ENCODE measurements at regions of chr9 and their contacts with region 1.

Region 1: DNA sequence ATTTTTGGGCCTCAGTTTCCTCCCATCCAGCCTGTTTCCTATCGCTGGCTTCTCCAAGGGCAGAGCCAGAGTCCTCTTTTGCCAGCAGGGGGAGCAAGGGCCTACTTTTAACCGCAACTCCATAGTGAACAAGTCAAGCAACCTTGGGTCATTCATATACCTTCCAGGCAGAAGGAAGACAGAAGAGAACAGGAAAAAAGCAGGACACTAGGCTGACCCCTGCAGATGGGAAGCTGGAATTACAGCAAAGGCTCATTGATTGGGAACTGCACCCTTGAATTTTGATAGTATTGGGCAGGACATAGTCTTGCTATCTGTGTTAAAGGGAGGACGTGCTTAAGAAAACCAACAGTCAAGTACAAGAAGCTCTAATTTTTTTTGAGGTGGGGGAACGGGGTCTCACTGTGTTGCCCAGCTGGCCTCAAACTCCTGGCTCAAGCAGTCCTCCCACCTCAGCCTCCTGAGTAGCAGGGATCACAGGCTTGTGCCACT is 30.1 kb downstream of the QRFP start:
- DNase-seq: peak in 1 of 2 donors; percentile 70
- ATAC-seq: peak; percentile 42 to 69 (median 44)
- H3K4me3 ChIP-seq: no peak overlapping the region
- H3K4me3 Mint-ChIP-seq: no peak overlapping the region
- H3K27ac ChIP-seq: no peak overlapping the region
- H3K27ac Mint-ChIP-seq: peak overlapping the region in 1 of 2 donors; percentile 13
- H3K4me1 ChIP-seq: no peaks in the 10 kb centered on the region
- H3K4me1 Mint-ChIP-seq: peaks cover 7 to 15% of the 10 kb centered on the region in 2 donors
- H3K27me3 ChIP-seq: no peaks in the 10 kb centered on the region
- H3K27me3 Mint-ChIP-seq: no peaks in the 10 kb centered on the region
- CTCF ChIP-seq: peak; percentile 57

Region 2: DNA sequence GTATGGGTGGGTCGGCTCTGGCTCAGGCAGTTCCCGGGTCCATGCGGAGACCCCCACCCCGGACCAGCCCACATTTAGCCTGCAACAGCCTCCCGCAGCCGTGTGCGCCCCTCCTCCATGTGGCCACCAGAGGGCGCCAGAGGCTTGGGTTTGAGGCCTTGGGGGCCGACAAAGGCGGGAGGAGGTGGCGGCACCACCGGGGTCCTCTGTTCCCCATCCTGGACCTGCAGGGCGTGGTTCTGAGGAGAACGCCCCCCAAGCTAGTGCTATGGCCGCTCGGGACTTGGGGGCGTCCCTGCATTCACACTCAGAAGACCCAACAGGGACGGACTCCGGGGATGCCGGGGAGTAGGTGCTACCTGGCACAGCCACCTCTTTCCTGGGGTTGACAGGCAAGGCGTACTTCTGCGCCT is 405.3 kb before region 1 on chr9:
- intact Hi-C with region 1: loop called (anchors 10 kb)
- DNase-seq: peak; percentile 66 to 83
- ATAC-seq: peak; percentile 61 to 78 (median 62)
- H3K4me3 ChIP-seq: no peak overlapping the region
- H3K4me3 Mint-ChIP-seq: no peak overlapping the region
- H3K27ac ChIP-seq: no peak overlapping the region
- H3K27ac Mint-ChIP-seq: no peak overlapping the region
- H3K4me1 ChIP-seq: no peaks in the 10 kb centered on the region
- H3K4me1 Mint-ChIP-seq: no peaks in the 10 kb centered on the region
- H3K27me3 ChIP-seq: no peaks in the 10 kb centered on the region
- H3K27me3 Mint-ChIP-seq: peaks cover 8 to 10% of the 10 kb centered on the region in 2 donors
- CTCF ChIP-seq: peak; percentile 85

Region 3: GRCh38 chr9:130607640-130608420 is 258.7 kb before region 1 on chr9:
- intact Hi-C with region 1: no loop called
- DNase-seq: no peak
- ATAC-seq: no peak
- H3K4me3 ChIP-seq: no peak overlapping the region
- H3K4me3 Mint-ChIP-seq: no peak overlapping the region
- H3K27ac ChIP-seq: no peak overlapping the region
- H3K27ac Mint-ChIP-seq: no peak overlapping the region
- H3K4me1 ChIP-seq: no peaks in the 10 kb centered on the region
- H3K4me1 Mint-ChIP-seq: peaks cover 9 to 11% of the 10 kb centered on the region in 2 donors
- H3K27me3 ChIP-seq: no peaks in the 10 kb centered on the region
- H3K27me3 Mint-ChIP-seq: no peaks in the 10 kb centered on the region
- CTCF ChIP-seq: no peak

Region 4: GRCh38 chr9:130707225-130707976 is 159.1 kb before region 1 on chr9:
- intact Hi-C with region 1: loop called (anchors 1 kb)
- DNase-seq: peak; percentile 58 to 88
- ATAC-seq: peak; percentile 46 to 69 (median 46)
- H3K4me3 ChIP-seq: no peak overlapping the region
- H3K4me3 Mint-ChIP-seq: no peak overlapping the region
- H3K27ac ChIP-seq: no peak overlapping the region
- H3K27ac Mint-ChIP-seq: no peak overlapping the region
- H3K4me1 ChIP-seq: peaks cover 6% of the 10 kb centered on the region
- H3K4me1 Mint-ChIP-seq: peaks cover 7 to 8% of the 10 kb centered on the region in 2 donors
- H3K27me3 ChIP-seq: no peaks in the 10 kb centered on the region
- H3K27me3 Mint-ChIP-seq: no peaks in the 10 kb centered on the region
- CTCF ChIP-seq: peak; percentile 80

Region 5: GRCh38 chr9:130770679-130771442 is 95.7 kb before region 1 on chr9:
- intact Hi-C with region 1: loop called (anchors 1 kb)
- DNase-seq: peak in 1 of 2 donors; percentile 61
- ATAC-seq: peak; percentile 82 to 86 (median 85)
- H3K4me3 ChIP-seq: no peak overlapping the region
- H3K4me3 Mint-ChIP-seq: no peak overlapping the region
- H3K27ac ChIP-seq: no peak overlapping the region
- H3K27ac Mint-ChIP-seq: no peak overlapping the region
- H3K4me1 ChIP-seq: peaks cover 16% of the 10 kb centered on the region
- H3K4me1 Mint-ChIP-seq: peaks cover 30 to 37% of the 10 kb centered on the region in 2 donors
- H3K27me3 ChIP-seq: no peaks in the 10 kb centered on the region
- H3K27me3 Mint-ChIP-seq: no peaks in the 10 kb centered on the region
- CTCF ChIP-seq: peak; percentile 64